A549 (cell line): ENCODE measurements at regions of chr2 and their contacts with region 1.

Region 1: DNA sequence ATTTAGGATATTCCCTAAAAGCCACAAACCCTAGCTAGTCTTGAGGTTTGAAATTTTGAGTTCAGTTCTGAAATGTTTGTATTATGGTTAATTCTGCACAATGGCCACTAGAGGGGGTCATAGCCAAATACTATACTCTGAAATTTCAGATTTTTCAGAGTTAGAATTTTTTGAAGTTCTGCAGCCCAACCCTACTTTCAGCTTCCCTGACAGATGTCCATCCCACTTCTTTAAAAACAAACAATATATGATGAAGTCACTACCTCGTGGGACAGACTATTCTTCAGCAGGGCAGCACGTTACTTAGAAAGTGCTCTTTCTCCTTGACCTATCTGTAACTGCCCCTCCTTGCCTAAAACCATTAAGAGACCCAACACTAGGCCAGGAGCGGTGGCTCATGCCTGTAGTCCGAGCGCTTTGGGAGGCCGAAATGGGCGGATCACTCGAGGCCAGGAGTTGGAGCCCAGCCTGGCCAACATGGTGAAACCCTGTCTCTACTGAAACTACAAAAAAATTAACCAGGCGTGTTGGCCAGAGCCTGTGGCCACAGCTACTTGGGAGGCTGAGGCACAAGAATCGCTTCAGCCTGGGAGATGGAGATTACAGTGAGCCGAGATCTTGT is 48.2 kb upstream of the PAPOLG start:
- DNase-seq: peak; percentile 36 to 47
- ATAC-seq: peak; percentile 60 to 75
- H3K4me3 ChIP-seq: no peak overlapping the region
- H3K27ac ChIP-seq: no peak overlapping the region
- H3K4me1 ChIP-seq: no peaks in the 10 kb centered on the region
- CTCF ChIP-seq: peak; percentile 94
- EP300 ChIP-seq: no peak
- POLR2A ChIP-seq: no peak
- RAD21 ChIP-seq: peak; percentile 82 to 84

Region 2: DNA sequence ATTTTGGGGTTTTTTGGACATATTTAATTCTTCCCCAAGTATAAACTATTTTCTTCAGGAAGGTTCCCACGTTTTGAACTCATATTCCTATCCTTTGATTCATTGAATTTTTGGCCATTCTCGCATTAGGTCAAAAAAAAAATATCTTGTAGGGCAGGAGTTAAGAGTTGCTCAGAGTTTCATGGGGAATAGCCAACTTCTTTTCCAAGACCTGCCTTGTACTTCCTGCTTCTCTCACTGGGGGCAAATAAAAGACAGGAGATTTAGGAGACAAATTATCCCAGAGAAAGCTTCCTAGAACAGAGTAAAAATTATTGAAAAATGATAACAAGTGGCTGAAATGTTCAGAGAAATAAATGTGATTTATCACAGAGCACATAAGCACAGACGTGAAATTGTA is 99.2 kb before region 1 on chr2:
- CTCF ChIA-PET with region 1: no interaction called
- POLR2A ChIA-PET with region 1: no interaction called
- DNase-seq: no peak
- ATAC-seq: no peak
- H3K4me3 ChIP-seq: no peak overlapping the region
- H3K27ac ChIP-seq: no peak overlapping the region
- H3K4me1 ChIP-seq: no peaks in the 10 kb centered on the region
- CTCF ChIP-seq: no peak
- EP300 ChIP-seq: no peak
- POLR2A ChIP-seq: no peak
- RAD21 ChIP-seq: no peak

Region 3: GRCh38 chr2:60719331-60719730 is 11.5 kb after region 1 on chr2:
- CTCF ChIA-PET with region 1: interaction called, 23 read pairs
- POLR2A ChIA-PET with region 1: no interaction called
- DNase-seq: no peak
- ATAC-seq: no peak
- H3K4me3 ChIP-seq: no peak overlapping the region
- H3K27ac ChIP-seq: no peak overlapping the region
- H3K4me1 ChIP-seq: no peaks in the 10 kb centered on the region
- CTCF ChIP-seq: no peak
- EP300 ChIP-seq: no peak
- POLR2A ChIP-seq: no peak
- RAD21 ChIP-seq: no peak

Region 4: GRCh38 chr2:60745761-60746160 is 37.9 kb after region 1 on chr2:
- CTCF ChIA-PET with region 1: interaction called, 19 read pairs
- POLR2A ChIA-PET with region 1: no interaction called
- DNase-seq: no peak
- ATAC-seq: no peak; a peak in 1 of 6 replicates
- H3K4me3 ChIP-seq: no peak overlapping the region
- H3K27ac ChIP-seq: no peak overlapping the region
- H3K4me1 ChIP-seq: no peaks in the 10 kb centered on the region
- CTCF ChIP-seq: no peak
- EP300 ChIP-seq: no peak
- POLR2A ChIP-seq: no peak
- RAD21 ChIP-seq: no peak

Region 5: DNA sequence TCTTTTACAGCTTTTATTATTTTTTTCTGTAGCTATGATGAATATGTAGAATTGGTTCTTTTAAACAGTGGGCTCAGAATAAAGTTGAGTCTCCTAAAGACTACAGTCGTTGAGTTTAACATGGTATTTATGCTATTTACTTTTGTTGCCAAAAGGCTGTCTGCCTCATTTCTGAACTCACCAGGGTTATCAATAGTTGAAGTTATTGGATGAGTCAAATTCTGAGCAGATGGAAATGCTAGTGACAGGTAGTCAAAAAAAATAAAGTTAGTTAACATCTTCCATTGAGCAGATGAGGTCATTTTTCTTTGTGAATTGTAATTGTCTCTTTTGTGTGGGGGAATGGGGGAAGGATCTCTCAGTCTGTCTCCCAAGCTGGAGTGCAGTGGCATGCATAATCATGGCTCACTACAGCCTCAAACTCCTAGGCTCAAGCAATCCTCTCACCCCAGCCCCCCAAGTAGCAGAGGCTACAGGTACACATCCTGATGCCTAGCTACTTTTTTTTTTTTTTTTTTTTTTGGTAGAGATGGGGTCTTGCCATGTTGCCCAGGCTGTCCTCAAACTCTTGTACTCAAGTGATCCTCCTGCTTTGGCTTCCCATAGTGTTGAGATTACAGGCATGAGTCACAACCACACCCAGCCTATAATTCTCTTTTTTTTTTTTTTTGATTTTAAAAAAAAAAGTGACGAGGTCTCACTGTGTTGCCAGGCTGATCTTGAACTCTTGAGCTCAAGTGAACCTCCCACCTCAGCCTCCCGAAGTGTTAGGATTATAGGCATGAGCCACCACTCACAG is 57.1 kb after region 1 on chr2:
- CTCF ChIA-PET with region 1: interaction called, 17 read pairs
- POLR2A ChIA-PET with region 1: no interaction called
- DNase-seq: peak in 1 of 2 experiments; percentile 29
- ATAC-seq: peak in 1 of 2 experiments; percentile 43; a peak in 3 of 6 replicates
- H3K4me3 ChIP-seq: no peak overlapping the region
- H3K27ac ChIP-seq: no peak overlapping the region
- H3K4me1 ChIP-seq: peaks cover 8% of the 10 kb centered on the region
- CTCF ChIP-seq: no peak
- EP300 ChIP-seq: no peak
- POLR2A ChIP-seq: no peak
- RAD21 ChIP-seq: no peak

Region 6: GRCh38 chr2:61006486-61007105 is 298.7 kb after region 1 on chr2:
- CTCF ChIA-PET with region 1: interaction called, 135 read pairs
- POLR2A ChIA-PET with region 1: no interaction called
- DNase-seq: no peak
- ATAC-seq: no peak
- H3K4me3 ChIP-seq: no peak overlapping the region
- H3K27ac ChIP-seq: no peak overlapping the region
- H3K4me1 ChIP-seq: peaks cover 22% of the 10 kb centered on the region
- CTCF ChIP-seq: no peak
- EP300 ChIP-seq: no peak
- POLR2A ChIP-seq: no peak
- RAD21 ChIP-seq: no peak

Region 7: GRCh38 chr2:61193670-61194571 is 486.1 kb after region 1 on chr2:
- CTCF ChIA-PET with region 1: no interaction called
- POLR2A ChIA-PET with region 1: no interaction called
- DNase-seq: no peak
- ATAC-seq: peak in 1 of 2 experiments; percentile 24; a peak in 3 of 6 replicates
- H3K4me3 ChIP-seq: no peak overlapping the region
- H3K27ac ChIP-seq: no peak overlapping the region
- H3K4me1 ChIP-seq: no peaks in the 10 kb centered on the region
- CTCF ChIP-seq: no peak
- EP300 ChIP-seq: no peak
- POLR2A ChIP-seq: no peak
- RAD21 ChIP-seq: no peak